Left cardiac atrium (tissue), 4 donors: ENCODE measurements at regions of chr16 and their contacts with region 1.

Region 1: GRCh38 chr16:9422769-9423513 is 331.5 kb downstream of the HAPSTR1 start:
- DNase-seq: no peak
- ATAC-seq: peak in 1 of 2 donors; percentile 68

Region 2: DNA sequence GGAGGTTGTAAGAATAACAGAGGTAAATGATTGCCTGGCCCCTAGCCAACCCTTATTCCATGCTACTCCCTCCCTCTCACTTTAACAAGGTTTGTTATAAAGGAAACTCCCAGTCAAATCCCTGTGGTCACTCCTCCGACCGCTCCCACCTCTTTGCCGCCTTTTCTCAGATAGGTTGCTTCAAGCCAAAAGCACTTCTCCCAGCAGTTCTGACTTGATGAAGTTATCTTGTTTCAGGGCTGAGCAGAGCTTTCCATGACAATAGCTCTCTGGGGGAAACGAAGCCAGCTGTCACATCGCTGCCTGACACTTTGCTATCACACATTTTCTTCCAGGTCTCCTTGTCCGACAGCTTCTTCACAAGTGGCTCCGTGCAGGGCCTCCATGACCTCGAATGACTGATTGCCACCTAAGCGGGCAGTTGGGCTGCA is 52.9 kb before region 1 on chr16:
- intact Hi-C with region 1: loop called in 1 of 2 experiments (anchors 2 kb)
- DNase-seq: peak; percentile 64
- ATAC-seq: peak; percentile 64 to 79

Region 3: GRCh38 chr16:9489835-9490467 is 67.0 kb after region 1 on chr16:
- intact Hi-C with region 1: loop called in 1 of 2 experiments (anchors 5 kb)
- DNase-seq: peak; percentile 75
- ATAC-seq: peak; percentile 55 to 98